A549 (cell line): ENCODE measurements at regions of chr10 and their contacts with region 1.

Region 1: DNA sequence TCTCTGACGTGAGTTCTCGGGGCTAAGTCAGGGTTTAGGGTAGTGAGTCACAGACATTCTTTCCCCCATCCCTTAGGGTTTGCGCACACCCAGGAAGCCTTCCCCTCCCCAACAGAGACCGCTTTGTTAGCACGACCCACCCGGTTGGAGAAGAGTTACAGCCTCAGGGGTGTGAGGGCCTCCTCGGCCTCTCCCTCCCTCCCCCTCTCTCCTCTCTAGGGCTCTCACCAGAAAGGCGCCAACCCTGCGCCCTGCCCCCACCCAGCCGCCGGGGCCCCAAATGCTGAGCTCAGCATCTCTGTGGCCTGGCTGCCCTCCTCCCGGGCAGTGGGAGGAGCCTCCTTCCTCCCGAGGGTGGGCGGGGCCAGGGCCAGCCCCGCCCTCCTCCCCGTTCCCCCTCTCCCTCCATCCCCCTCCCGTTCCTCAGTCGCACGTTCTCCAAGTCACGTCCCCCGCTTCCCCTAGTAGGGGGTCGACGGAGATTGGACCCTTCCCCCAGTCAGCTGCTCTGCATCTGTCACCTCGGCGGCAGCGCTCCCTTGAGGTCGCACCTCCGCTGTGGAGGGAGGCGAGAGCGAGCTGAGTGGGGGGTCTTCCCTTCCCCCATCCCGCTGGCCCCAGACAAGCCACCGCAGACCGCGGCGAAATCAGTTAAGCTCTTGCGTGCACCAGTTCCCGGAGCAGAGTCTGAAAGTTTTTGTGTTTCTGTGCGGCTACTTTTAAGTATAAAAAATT is 13.0 kb upstream of the DDIT4 start:
- DNase-seq: peak; percentile 91 to 99
- ATAC-seq: peak; percentile 90 to 91
- H3K4me3 ChIP-seq: peak overlapping the region; percentile 41
- H3K27ac ChIP-seq: peak overlapping the region; percentile 99 to 100
- H3K4me1 ChIP-seq: peaks cover 83% of the 10 kb centered on the region
- CTCF ChIP-seq: no peak
- EP300 ChIP-seq: peak; percentile 95 to 97; a peak in 4 of 5 replicates
- POLR2A ChIP-seq: peak; percentile 32
- RAD21 ChIP-seq: peak; percentile 42 to 61

Region 2: DNA sequence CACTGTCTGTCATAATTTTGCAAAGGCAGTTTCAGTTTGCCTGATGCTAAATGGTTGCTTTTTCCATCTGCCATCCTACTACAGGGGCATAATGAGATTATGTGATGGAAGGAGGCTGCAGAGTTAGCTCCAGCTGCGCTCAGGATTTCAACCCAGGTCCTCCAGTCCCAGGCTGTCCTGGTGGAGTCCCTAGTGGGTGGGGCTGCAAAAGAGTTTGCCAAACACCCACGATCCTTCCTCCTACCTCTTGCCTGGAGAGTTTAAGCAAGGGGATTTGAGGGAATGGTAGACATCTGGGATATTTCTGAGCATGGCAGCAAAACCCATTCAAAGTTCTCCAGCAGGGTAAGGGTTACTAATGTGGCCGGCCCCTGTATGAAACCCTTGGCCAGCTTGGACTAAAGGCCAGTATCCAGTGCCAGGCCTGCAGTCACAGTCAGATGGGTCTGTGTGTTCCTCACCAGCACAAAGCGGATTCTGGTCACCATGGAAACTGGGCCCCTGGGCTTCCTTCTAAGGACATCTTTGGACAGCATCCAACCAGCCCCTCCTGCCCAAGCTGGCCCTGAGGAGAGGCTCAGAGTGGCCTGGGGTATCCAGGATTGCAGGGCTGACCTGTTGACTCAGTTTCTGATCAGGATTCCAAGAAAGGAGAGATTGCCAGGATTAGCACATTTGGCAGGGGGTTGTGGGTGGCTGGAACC is 339.3 kb before region 1 on chr10:
- CTCF ChIA-PET with region 1: no interaction called
- POLR2A ChIA-PET with region 1: no interaction called
- DNase-seq: peak in 1 of 2 experiments; percentile 36
- ATAC-seq: peak in 1 of 2 experiments; percentile 51; a peak in 3 of 6 replicates
- H3K4me3 ChIP-seq: no peak overlapping the region
- H3K27ac ChIP-seq: peak overlapping the region; percentile 64 to 76
- H3K4me1 ChIP-seq: peaks cover 36% of the 10 kb centered on the region
- CTCF ChIP-seq: no peak
- EP300 ChIP-seq: no peak
- POLR2A ChIP-seq: no peak
- RAD21 ChIP-seq: no peak

Region 3: DNA sequence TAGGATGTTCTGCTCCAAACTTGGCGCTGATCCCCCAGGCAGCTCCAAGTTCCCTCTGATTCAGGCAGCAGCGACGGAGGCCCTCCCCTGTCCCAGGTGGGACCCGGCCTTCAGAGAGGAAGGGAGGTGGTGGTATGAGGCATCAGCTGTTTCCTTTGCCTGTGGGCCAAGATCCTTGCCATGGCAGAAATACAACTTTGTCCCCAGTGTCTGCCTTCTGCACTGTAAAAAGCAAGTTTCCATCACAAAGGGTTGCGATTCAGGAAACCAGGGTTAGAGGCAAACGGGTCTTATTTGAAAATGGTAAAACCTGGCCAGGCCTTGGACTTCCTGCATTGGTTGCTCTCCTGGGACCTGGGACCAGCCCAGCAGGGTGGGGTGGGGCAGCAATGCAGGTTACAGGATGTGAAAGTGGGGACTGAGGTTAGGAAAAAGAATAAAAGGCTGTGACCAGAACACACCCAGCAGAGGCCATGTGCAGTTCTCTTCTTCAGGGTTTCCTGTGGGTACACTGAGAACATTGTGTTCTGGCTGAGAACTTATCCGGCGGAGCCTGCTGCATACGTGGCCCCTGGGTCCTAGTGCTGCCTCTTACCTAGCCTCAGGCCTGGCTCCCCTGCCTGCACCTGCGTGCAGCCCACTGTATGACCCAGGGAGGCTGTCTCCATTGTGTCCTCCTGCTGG is 12.1 kb before region 1 on chr10:
- CTCF ChIA-PET with region 1: interaction called, 15 read pairs
- POLR2A ChIA-PET with region 1: interaction called, 8 read pairs
- DNase-seq: peak in 1 of 2 experiments; percentile 60
- ATAC-seq: peak; percentile 25 to 51; a peak in 4 of 6 replicates
- H3K4me3 ChIP-seq: peak overlapping the region; percentile 9; the same call in 2 of the 3 replicates
- H3K27ac ChIP-seq: peak overlapping the region; percentile 99 to 100
- H3K4me1 ChIP-seq: peaks cover 67% of the 10 kb centered on the region
- CTCF ChIP-seq: no peak
- EP300 ChIP-seq: no peak
- POLR2A ChIP-seq: peak; percentile 22; the same call in 1 of the 2 replicates
- RAD21 ChIP-seq: no peak; a peak in 1 of 5 replicates